ENCODE measurements at regions of chr10 and their contacts with region 1.

Region 1: GRCh38 chr10:102167861-102168260 is 15.7 kb downstream of the NOLC1 start:
- DNase-seq: no peak
- ATAC-seq: no peak
- H3K4me3 ChIP-seq: no peak overlapping the region
- H3K4me3 Mint-ChIP-seq: peak overlapping the region in 1 of 10 donors; percentile 45
- H3K27ac ChIP-seq: no peak overlapping the region
- H3K27ac Mint-ChIP-seq: no peak overlapping the region
- H3K4me1 ChIP-seq: peaks cover 0 to 8% of the 10 kb centered on the region in 2 donors
- H3K4me1 Mint-ChIP-seq: peaks cover 0 to 20% (median 8%) of the 10 kb centered on the region in 7 donors
- H3K27me3 ChIP-seq: no peaks in the 10 kb centered on the region
- H3K27me3 Mint-ChIP-seq: peaks cover 0 to 5% (median 0%) of the 10 kb centered on the region in 5 donors

Region 2: GRCh38 chr10:101394524-101395133 is 773.2 kb before region 1 on chr10:
- CTCF ChIA-PET with region 1: no interaction called
- POLR2A ChIA-PET with region 1: no interaction called
- intact Hi-C with region 1: no loop called
- DNase-seq: no peak
- ATAC-seq: no peak
- H3K4me3 ChIP-seq: no peak overlapping the region
- H3K4me3 Mint-ChIP-seq: no peak overlapping the region
- H3K27ac ChIP-seq: no peak overlapping the region
- H3K27ac Mint-ChIP-seq: no peak overlapping the region
- H3K4me1 ChIP-seq: peaks cover 0 to 2% of the 10 kb centered on the region in 2 donors
- H3K4me1 Mint-ChIP-seq: peaks cover 4 to 37% (median 20%) of the 10 kb centered on the region in 7 donors
- H3K27me3 ChIP-seq: no peaks in the 10 kb centered on the region
- H3K27me3 Mint-ChIP-seq: no peaks in the 10 kb centered on the region

Region 3: GRCh38 chr10:101595591-101596433 is 572.0 kb before region 1 on chr10:
- CTCF ChIA-PET with region 1: no interaction called
- POLR2A ChIA-PET with region 1: no interaction called
- intact Hi-C with region 1: no loop called
- DNase-seq: no peak
- ATAC-seq: no peak
- H3K4me3 ChIP-seq: no peak overlapping the region
- H3K4me3 Mint-ChIP-seq: no peak overlapping the region
- H3K27ac ChIP-seq: no peak overlapping the region
- H3K27ac Mint-ChIP-seq: no peak overlapping the region
- H3K4me1 ChIP-seq: no peaks in the 10 kb centered on the region
- H3K4me1 Mint-ChIP-seq: peaks cover 0 to 3% (median 0%) of the 10 kb centered on the region in 7 donors
- H3K27me3 ChIP-seq: no peaks in the 10 kb centered on the region
- H3K27me3 Mint-ChIP-seq: no peaks in the 10 kb centered on the region

Region 4: DNA sequence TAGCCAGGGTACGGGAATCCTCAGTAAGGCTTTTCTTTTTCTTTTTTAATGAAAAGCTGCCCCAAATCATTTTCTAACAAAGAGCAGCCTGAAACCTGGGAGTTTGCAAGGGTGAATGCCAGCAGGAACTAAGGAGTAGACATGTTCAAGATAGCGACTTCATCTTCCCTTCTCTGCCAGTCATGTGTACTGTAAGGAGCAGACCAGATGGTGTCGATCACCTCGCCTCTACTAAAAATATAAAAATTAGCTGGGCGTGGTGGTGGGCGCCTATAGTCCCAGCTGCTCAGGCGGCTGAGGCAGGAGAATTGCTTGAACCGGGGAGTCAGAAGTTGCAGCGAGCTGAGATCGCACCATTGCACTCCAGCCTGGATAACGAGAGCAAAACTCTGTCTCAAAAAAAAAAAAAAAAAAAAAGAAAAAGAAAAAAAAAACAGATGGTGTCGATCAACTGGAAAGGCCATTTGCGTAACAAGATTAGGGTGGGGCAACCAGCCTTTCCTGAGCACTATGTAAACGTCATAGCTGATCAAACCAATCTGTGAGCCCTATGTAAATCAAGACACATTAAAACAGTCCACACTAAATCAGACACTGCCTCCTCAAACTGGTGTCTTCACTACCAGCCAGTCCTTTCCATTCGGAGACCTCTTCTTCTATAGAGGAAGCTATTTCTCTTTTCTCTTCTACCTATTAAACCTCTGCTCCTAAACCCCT is 18.1 kb after region 1 on chr10:
- CTCF ChIA-PET with region 1: interaction called, 3 read pairs
- POLR2A ChIA-PET with region 1: no interaction called
- intact Hi-C with region 1: loop called in 1 of 2 experiments (anchors 1 kb)
- DNase-seq: no peak
- ATAC-seq: no peak
- H3K4me3 ChIP-seq: no peak overlapping the region
- H3K4me3 Mint-ChIP-seq: no peak overlapping the region
- H3K27ac ChIP-seq: no peak overlapping the region
- H3K27ac Mint-ChIP-seq: peak overlapping the region in 1 of 9 donors; percentile 60
- H3K4me1 ChIP-seq: peaks cover 10 to 20% of the 10 kb centered on the region in 2 donors
- H3K4me1 Mint-ChIP-seq: peaks cover 11 to 18% (median 15%) of the 10 kb centered on the region in 7 donors
- H3K27me3 ChIP-seq: no peaks in the 10 kb centered on the region
- H3K27me3 Mint-ChIP-seq: no peaks in the 10 kb centered on the region

Region 5: DNA sequence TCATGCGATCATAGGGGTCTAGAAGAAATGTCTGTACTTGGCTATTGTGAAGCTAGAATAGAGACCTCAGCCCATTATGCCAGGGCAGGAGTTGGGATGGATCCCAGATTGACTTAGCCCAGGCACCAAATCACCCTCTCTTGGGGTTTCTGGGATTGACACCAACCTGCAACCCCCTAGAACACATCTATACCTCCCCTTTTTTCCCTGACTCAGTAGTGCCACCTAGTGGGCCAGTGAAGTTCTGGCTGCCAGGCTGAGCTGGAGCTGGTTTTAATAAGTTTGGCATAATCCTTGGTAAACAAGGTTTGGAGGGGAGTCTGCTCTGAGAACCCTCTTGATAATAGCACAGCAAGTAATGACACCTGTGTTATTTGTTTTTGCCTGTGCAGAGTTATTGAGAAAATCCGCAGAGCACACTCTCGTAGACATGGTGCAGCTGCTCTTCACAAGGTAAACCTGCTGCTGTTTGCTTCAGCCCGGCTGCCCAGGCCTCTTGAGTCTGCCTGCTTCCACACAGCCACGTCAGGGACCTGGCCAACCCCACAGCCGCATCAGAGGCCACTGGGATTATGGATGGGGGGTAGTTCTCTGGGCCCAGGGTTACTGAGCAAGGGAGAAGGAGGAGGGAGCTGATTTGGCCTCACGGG is 184.3 kb after region 1 on chr10:
- CTCF ChIA-PET with region 1: interaction called, 13 read pairs
- POLR2A ChIA-PET with region 1: no interaction called
- intact Hi-C with region 1: loop called (anchors 1 kb)
- DNase-seq: peak; percentile 41 to 75 (median 64)
- ATAC-seq: peak; percentile 85
- H3K4me3 ChIP-seq: no peak overlapping the region
- H3K4me3 Mint-ChIP-seq: no peak overlapping the region
- H3K27ac ChIP-seq: no peak overlapping the region
- H3K27ac Mint-ChIP-seq: no peak overlapping the region
- H3K4me1 ChIP-seq: no peaks in the 10 kb centered on the region
- H3K4me1 Mint-ChIP-seq: peaks cover 0 to 3% (median 0%) of the 10 kb centered on the region in 7 donors
- H3K27me3 ChIP-seq: no peaks in the 10 kb centered on the region
- H3K27me3 Mint-ChIP-seq: no peaks in the 10 kb centered on the region

Region 6: DNA sequence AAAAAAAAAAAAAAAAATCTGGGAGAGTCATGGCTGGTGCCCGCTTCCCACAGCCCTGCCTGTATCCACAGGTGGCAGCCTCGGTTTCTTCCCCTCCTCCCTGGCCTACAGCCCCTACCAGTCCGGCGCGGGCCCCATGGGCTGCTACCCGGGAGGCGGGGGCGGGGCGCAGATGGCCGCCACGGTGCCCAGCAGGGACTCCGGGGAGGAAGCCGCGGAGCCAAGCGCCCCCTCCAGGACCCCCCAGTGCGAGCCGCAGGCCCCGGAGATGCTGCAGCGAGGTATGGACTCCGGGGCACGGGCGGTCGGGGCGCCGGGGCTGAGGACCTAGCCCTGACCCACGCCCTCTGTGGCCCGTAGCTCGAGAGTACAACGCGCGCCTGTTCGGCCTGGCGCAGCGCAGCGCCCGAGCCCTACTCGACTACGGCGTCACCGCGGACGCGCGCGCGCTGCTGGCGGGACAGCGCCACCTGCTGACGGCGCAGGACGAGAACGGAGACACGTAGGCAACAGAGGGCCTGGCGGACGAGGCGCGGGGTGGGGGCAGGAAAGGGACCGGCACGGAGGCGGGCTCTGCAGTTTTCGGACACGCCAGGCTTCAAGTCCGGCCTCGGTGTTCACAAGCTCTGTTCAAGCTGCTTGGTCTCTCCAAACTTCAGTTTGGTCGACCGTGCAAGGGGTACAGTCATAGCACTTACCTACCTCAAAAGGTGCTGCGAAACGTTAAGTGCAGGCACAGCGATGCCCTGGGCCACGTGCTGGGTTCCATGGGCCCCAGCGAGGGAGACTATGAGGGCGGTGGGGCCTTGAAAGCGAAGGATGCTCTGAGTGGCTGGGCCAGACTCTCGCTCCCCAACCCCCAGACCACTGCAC is 231.6 kb after region 1 on chr10:
- CTCF ChIA-PET with region 1: no interaction called
- POLR2A ChIA-PET with region 1: no interaction called
- intact Hi-C with region 1: loop called in 1 of 2 experiments (anchors 1 kb)
- DNase-seq: peak; percentile 80 to 93 (median 88)
- ATAC-seq: peak; percentile 74
- H3K4me3 ChIP-seq: peak overlapping the region; percentile 56
- H3K4me3 Mint-ChIP-seq: peak overlapping the region; percentile 62 to 83 (median 76)
- H3K27ac ChIP-seq: peak overlapping the region; percentile 93
- H3K27ac Mint-ChIP-seq: peak overlapping the region; percentile 46 to 100 (median 88)
- H3K4me1 ChIP-seq: peaks cover 20 to 26% of the 10 kb centered on the region in 2 donors
- H3K4me1 Mint-ChIP-seq: peaks cover 15 to 42% (median 35%) of the 10 kb centered on the region in 7 donors
- H3K27me3 ChIP-seq: no peaks in the 10 kb centered on the region
- H3K27me3 Mint-ChIP-seq: no peaks in the 10 kb centered on the region

Region 7: GRCh38 chr10:102467971-102468438 is 300.1 kb after region 1 on chr10:
- CTCF ChIA-PET with region 1: no interaction called
- POLR2A ChIA-PET with region 1: no interaction called
- intact Hi-C with region 1: no loop called
- DNase-seq: no peak
- ATAC-seq: peak; percentile 61
- H3K4me3 ChIP-seq: no peak overlapping the region
- H3K4me3 Mint-ChIP-seq: no peak overlapping the region
- H3K27ac ChIP-seq: no peak overlapping the region
- H3K27ac Mint-ChIP-seq: no peak overlapping the region
- H3K4me1 ChIP-seq: peaks cover 2 to 7% of the 10 kb centered on the region in 2 donors
- H3K4me1 Mint-ChIP-seq: peaks cover 6 to 18% (median 12%) of the 10 kb centered on the region in 7 donors
- H3K27me3 ChIP-seq: no peaks in the 10 kb centered on the region
- H3K27me3 Mint-ChIP-seq: peaks cover 0 to 2% (median 0%) of the 10 kb centered on the region in 5 donors

Region 8: GRCh38 chr10:102583435-102584417 is 415.9 kb after region 1 on chr10:
- CTCF ChIA-PET with region 1: interaction called, 7 read pairs
- POLR2A ChIA-PET with region 1: no interaction called
- intact Hi-C with region 1: loop called in 1 of 2 experiments (anchors 1 kb)
- DNase-seq: peak; percentile 57 to 79 (median 76)
- ATAC-seq: peak; percentile 97
- H3K4me3 ChIP-seq: no peak overlapping the region
- H3K4me3 Mint-ChIP-seq: no peak overlapping the region
- H3K27ac ChIP-seq: no peak overlapping the region
- H3K27ac Mint-ChIP-seq: peak overlapping the region in 5 of 9 donors; percentile 14 to 76 (median 47)
- H3K4me1 ChIP-seq: no peaks in the 10 kb centered on the region
- H3K4me1 Mint-ChIP-seq: peaks cover 6 to 21% (median 16%) of the 10 kb centered on the region in 7 donors
- H3K27me3 ChIP-seq: no peaks in the 10 kb centered on the region
- H3K27me3 Mint-ChIP-seq: no peaks in the 10 kb centered on the region

Measured in naive thymus-derived CD4-positive, alpha-beta T cell (primary cell).